ENCODE measurements at regions of chr6 and their contacts with region 1.

Region 1: GRCh38 chr6:166419286-166419685 is 36.5 kb upstream of the MPC1 start:
- DNase-seq: peak; percentile 75
- ATAC-seq: peak; percentile 50
- H3K4me3 Mint-ChIP-seq: no peak overlapping the region
- H3K27ac Mint-ChIP-seq: peak overlapping the region; percentile 34
- H3K4me1 Mint-ChIP-seq: peaks cover 62% of the 10 kb centered on the region
- H3K27me3 Mint-ChIP-seq: no peaks in the 10 kb centered on the region

Region 2: DNA sequence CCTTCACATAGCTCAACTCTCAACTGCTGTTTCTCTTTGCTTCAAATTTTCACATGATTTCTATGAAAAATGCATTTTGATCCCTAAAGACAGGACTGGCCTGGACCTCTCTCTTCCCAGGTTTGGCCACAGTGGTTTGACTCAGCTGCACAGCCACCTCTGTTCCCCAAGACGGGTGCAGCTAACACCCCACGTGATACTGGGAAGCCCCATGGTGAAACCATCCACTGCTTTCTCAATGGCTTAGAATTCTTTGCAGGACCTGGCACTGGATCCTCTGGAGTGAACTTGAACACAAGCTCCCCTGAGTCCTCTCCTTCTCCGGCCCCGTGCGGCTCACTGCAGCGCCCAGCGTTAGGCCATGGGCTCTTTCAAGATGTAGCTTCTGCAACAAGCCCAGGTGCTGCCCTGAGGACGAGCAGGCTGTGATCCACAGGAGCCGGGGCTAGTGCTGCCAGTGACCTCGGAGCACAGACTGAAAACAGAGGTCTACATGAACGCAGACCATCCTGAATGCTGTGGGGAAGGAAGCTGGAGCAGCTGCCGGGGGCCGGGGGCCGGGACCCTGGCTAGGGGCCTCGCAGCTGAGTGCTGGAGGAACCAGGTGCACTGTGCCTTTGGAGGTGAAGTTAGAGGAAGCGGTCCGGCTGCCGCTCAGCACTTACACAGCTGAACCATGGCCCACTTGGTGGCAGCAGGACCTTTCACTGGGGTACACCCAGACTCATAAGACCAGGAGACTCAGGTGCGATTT is 22.2 kb after region 1 on chr6:
- CTCF ChIA-PET with region 1: no interaction called
- POLR2A ChIA-PET with region 1: no interaction called
- intact Hi-C with region 1: no loop called
- DNase-seq: no peak
- ATAC-seq: no peak
- H3K4me3 Mint-ChIP-seq: no peak overlapping the region
- H3K27ac Mint-ChIP-seq: no peak overlapping the region
- H3K4me1 Mint-ChIP-seq: peaks cover 9% of the 10 kb centered on the region
- H3K27me3 Mint-ChIP-seq: no peaks in the 10 kb centered on the region

Region 3: GRCh38 chr6:166488076-166488685 is 68.9 kb after region 1 on chr6:
- CTCF ChIA-PET with region 1: no interaction called
- POLR2A ChIA-PET with region 1: no interaction called
- intact Hi-C with region 1: loop called (anchors 5 kb)
- DNase-seq: peak; percentile 86
- ATAC-seq: peak; percentile 98
- H3K4me3 Mint-ChIP-seq: peak overlapping the region; percentile 65
- H3K27ac Mint-ChIP-seq: peak overlapping the region; percentile 98
- H3K4me1 Mint-ChIP-seq: peaks cover 19% of the 10 kb centered on the region
- H3K27me3 Mint-ChIP-seq: no peaks in the 10 kb centered on the region

Measured in activated CD4-positive, alpha-beta T cell treated with anti-CD3 and anti-CD28 coated beads for 36 hours (primary cell).